ENCODE measurements at regions of chr22 and their contacts with region 1.

Region 1: DNA sequence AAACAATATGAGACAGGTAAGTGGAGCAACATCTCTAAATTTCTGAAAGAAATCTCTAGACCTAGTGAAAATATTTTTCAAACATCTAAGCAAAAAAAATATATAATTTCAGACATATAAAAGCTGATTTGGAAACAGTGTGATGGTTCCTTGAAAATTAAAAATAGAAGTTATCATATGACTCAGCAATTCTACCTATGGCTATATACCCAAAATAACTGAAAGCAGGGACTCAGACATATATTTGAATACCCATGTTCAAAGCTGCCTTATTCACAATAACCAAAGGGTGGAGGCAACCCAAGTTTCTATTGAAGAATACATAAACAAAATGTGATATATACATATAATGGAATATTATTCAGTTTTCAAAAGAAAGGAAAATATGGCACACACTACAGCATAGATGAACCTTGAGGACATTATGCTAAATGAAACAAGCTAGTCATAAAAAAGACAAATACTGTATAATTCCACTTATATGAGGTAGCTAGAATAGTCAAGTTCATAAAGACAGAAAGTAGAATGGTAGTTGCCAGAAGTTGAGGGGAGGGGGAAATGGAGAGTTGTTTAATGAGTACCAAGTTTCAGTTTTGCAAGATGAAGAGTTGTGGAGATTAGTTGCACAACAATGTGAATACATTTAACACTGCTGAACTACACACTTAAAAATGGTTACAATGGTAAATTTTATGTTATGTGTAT is 300.4 kb downstream of the TTC28 start:
- DNase-seq: no peak
- H3K4me3 Mint-ChIP-seq: no peak overlapping the region
- H3K27ac Mint-ChIP-seq: peak overlapping the region; percentile 33
- H3K4me1 Mint-ChIP-seq: peaks cover 20% of the 10 kb centered on the region
- H3K27me3 Mint-ChIP-seq: no peaks in the 10 kb centered on the region

Region 2: DNA sequence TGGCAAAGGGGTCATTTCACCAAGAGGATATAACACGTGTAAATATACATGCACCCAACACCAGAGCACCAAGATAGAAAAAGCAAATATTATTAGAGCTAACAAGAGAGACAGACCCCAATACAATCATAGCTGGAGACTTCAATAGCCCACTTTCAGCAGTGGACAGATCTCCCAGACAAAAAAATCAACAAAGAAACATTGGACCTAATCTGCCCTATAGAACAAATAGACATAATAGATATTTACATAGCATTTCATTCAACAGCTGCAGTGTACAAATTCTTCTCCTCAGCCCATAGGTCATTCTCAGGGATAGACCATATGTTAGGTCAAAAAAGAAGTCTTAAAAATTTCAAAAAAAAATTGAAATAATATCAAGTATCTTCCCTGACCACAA is 12.4 kb before region 1 on chr22:
- intact Hi-C with region 1: no loop called
- DNase-seq: no peak
- H3K4me3 Mint-ChIP-seq: no peak overlapping the region
- H3K27ac Mint-ChIP-seq: no peak overlapping the region
- H3K4me1 Mint-ChIP-seq: peaks cover 27% of the 10 kb centered on the region
- H3K27me3 Mint-ChIP-seq: no peaks in the 10 kb centered on the region

Region 3: DNA sequence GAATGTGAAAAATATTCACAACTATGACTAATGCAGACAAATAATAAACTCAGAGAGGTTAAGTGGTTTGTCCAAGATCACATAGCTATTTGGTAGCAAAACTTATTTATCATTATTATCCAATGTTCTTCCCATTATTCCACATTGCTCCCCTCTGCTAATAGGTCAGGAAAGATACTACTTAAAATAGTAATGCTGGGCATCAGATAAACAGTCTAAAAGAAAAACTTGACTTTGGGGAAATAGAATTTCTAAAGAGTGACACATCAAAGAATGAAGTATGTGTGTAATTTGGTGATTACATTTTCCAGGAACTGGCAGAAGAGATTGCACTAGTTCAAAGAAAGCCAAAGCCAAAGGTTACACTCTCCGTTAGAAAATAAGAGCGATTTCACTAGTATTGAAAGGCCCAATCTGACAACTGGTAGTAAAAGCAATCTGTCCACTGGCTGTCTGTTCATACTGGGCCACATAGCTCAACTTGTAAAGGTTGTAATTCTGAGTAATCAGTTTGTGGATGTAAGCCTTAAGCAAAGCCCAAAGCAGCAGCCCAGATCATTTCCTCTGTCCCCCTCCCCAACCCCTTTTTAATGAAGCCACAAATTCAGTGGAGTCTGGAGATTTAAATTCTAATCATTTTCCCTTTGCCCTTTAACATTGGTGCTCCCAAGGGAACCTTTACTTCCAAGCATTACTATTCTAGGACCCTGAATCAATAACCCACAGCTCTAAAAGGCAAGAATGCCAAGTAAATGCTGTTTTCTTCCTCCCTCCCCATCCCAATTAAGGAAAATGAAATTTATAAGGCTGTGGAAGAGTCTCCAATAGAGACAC is 16.9 kb after region 1 on chr22:
- intact Hi-C with region 1: loop called (anchors 1 kb)
- DNase-seq: no peak
- H3K4me3 Mint-ChIP-seq: peak overlapping the region; percentile 14
- H3K27ac Mint-ChIP-seq: peak overlapping the region; percentile 62
- H3K4me1 Mint-ChIP-seq: peaks cover 51% of the 10 kb centered on the region
- H3K27me3 Mint-ChIP-seq: no peaks in the 10 kb centered on the region

Region 4: DNA sequence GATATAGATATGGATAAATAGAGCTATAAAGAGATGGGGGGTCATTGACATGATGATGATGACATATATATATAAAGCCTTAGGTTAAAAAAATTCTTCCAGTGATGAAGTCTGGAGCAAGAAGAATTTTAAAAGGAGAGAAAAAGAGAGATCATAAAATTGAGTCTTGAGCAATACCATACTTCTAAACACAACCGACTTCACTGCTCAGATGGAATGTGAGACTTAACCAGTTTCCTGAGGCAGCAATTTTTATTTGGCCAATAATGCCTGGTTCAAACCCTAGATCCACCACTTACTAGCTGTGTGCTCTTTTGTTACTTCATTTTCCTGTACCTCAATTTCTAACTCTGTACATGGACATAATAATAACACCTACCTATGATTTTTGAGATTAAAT is 70.9 kb after region 1 on chr22:
- intact Hi-C with region 1: no loop called
- DNase-seq: no peak
- H3K4me3 Mint-ChIP-seq: no peak overlapping the region
- H3K27ac Mint-ChIP-seq: no peak overlapping the region
- H3K4me1 Mint-ChIP-seq: no peaks in the 10 kb centered on the region
- H3K27me3 Mint-ChIP-seq: peaks cover 35% of the 10 kb centered on the region

Measured in activated T-helper 2 cell treated with anti-CD3 and anti-CD28 coated beads, Interferon-gamma antibody, Interleukin-2, Interleukin-4, amounts not matched to agents 10 μg/mL and 5 μg/mL and 100 μg/mL, durations not matched to agents 14 hours and 24 hours and 36 hours (primary cell).